Endothelial cell of umbilical vein (primary cell): ENCODE measurements at regions of chrX and their contacts with region 1.

Region 1: GRCh38 chrX:101617211-101618191 is at the start of gene ARMCX6:
- DNase-seq: peak; percentile 71
- H3K4me3 ChIP-seq: peak within 1 kb of the TSS; percentile 80 to 88 (median 87)
- H3K27ac ChIP-seq: peak within 1 kb of the TSS; percentile 60
- H3K4me1 ChIP-seq: peaks cover 9% of the 10 kb centered on the region
- H3K27me3 ChIP-seq: no peaks in the 10 kb centered on the region
- CTCF ChIP-seq: peak; percentile 8 to 57
- POLR2A ChIP-seq: peak; percentile 74
- total RNA-seq, gene ARMCX6: 91.9 and 98.6 TPM in 2 replicates

Region 2: GRCh38 chrX:101191217-101191750 is 426.2 kb before region 1 on chrX:
- CTCF ChIA-PET with region 1: no interaction called
- POLR2A ChIA-PET with region 1: no interaction called
- dilution Hi-C with region 1: no loop called
- intact Hi-C with region 1: no loop called
- DNase-seq: peak; percentile 29
- H3K4me3 ChIP-seq: peak overlapping the region in 1 of 3 experiments; percentile 28
- H3K27ac ChIP-seq: no peak overlapping the region
- H3K4me1 ChIP-seq: peaks cover 4% of the 10 kb centered on the region
- H3K27me3 ChIP-seq: no peaks in the 10 kb centered on the region
- CTCF ChIP-seq: no peak
- POLR2A ChIP-seq: no peak

Region 3: DNA sequence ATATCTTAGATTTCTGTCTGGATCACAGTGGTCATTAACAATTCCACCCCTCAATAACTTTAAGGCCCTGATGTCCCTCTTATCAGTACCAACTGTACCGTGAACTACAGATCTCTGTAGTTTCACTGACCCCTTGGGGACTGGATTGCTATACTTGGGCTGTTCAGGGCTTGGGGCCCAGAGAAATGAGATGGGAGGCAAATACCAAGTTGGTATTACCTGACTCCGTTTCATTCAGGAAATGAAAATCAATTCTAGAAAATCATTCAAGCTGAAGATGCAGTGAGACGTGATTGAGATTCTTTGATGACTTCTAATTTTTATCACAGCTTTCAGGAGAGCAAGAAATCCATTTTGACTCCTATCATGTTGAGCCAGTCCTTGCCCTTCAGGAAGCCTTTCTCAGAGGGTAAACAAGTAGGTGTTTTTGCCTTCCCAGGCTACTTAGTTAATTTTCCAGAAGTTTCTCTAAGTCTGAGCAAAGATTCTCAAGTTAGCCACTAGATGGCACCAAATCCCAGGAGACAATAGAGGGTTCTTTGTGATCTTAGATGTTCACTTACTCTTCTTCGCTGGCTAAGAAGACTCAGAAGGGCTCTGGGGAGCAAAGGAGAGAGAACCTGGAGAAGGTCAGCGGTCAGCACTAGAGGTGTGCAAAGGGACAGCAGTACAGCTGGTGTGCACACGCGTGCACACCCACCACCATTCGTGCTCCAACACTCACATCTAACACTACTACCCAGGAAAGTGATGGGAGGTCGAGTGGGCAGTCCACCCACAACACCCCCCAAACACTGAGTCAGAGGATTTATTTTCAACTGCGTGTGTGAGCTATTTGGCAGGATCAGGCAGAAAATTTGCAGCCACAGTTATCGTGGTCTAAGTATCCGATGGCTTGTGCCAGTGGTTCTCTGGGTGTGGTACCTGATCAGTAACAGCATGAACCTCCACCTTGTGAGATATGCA is 202.0 kb before region 1 on chrX:
- CTCF ChIA-PET with region 1: no interaction called
- POLR2A ChIA-PET with region 1: no interaction called
- dilution Hi-C with region 1: no loop called
- intact Hi-C with region 1: loop called (anchors 5 kb)
- DNase-seq: peak; percentile 78
- H3K4me3 ChIP-seq: no peak overlapping the region
- H3K27ac ChIP-seq: no peak overlapping the region
- H3K4me1 ChIP-seq: peaks cover 15% of the 10 kb centered on the region
- H3K27me3 ChIP-seq: no peaks in the 10 kb centered on the region
- CTCF ChIP-seq: peak; percentile 33 to 45
- POLR2A ChIP-seq: no peak

Region 4: DNA sequence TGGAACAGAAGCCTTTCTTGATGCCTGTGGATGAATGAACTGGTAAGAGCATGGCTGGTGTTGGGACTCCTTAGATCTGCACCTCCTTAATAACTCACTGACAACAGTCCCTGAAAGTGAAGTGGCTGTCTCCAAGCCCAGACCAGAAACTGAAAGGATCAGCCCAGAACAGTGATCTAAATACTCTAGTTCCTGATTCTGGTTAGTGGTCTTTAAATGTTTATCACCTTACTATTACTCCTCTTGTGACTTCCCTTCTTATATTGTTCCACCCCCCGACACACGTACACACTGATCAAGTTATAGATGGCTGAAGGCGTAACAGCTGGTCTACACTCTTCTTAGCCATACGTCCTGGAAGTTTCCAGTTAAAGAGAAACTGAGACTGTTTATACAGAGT is 76.0 kb after region 1 on chrX:
- CTCF ChIA-PET with region 1: no interaction called
- POLR2A ChIA-PET with region 1: no interaction called
- dilution Hi-C with region 1: no loop called
- intact Hi-C with region 1: loop called (anchors 5 kb)
- DNase-seq: no peak
- H3K4me3 ChIP-seq: no peak overlapping the region
- H3K27ac ChIP-seq: no peak overlapping the region
- H3K4me1 ChIP-seq: peaks cover 17% of the 10 kb centered on the region
- H3K27me3 ChIP-seq: no peaks in the 10 kb centered on the region
- CTCF ChIP-seq: no peak
- POLR2A ChIP-seq: no peak

Region 5: DNA sequence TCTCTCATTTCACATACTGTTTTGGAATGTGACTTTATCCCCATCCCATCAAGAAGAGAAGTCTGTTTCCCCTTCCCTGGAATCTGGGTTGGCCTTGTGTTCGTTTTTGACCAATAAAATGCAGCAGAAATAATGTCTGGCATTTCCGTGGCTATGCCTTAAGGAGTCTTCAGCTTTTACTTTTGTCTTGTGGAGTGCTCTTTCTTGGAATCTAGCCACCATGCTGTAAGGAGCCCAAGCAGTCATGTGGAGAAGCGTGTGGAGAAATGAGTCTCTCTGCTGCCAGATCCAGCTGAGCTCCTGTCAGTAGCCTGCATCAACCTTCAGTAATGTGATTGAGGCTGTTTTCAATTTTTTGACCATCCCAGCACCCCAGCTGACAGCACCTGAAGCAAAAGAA is 126.6 kb after region 1 on chrX:
- CTCF ChIA-PET with region 1: no interaction called
- POLR2A ChIA-PET with region 1: no interaction called
- dilution Hi-C with region 1: no loop called
- intact Hi-C with region 1: loop called (anchors 5 kb)
- DNase-seq: no peak
- H3K4me3 ChIP-seq: no peak overlapping the region
- H3K27ac ChIP-seq: no peak overlapping the region
- H3K4me1 ChIP-seq: no peaks in the 10 kb centered on the region
- H3K27me3 ChIP-seq: no peaks in the 10 kb centered on the region
- CTCF ChIP-seq: no peak
- POLR2A ChIP-seq: no peak

Region 6: GRCh38 chrX:101759000-101759399 is 141.5 kb after region 1 on chrX:
- CTCF ChIA-PET with region 1: interaction called, 3 read pairs
- POLR2A ChIA-PET with region 1: no interaction called
- dilution Hi-C with region 1: no loop called
- intact Hi-C with region 1: loop called (anchors 5 kb)
- DNase-seq: peak; percentile 69
- H3K4me3 ChIP-seq: no peak overlapping the region
- H3K27ac ChIP-seq: no peak overlapping the region
- H3K4me1 ChIP-seq: no peaks in the 10 kb centered on the region
- H3K27me3 ChIP-seq: no peaks in the 10 kb centered on the region
- CTCF ChIP-seq: peak; percentile 22 to 30
- POLR2A ChIP-seq: no peak

Region 7: GRCh38 chrX:101918751-101919150 is 301.2 kb after region 1 on chrX:
- CTCF ChIA-PET with region 1: no interaction called
- POLR2A ChIA-PET with region 1: no interaction called
- dilution Hi-C with region 1: no loop called
- intact Hi-C with region 1: no loop called
- DNase-seq: peak; percentile 69
- H3K4me3 ChIP-seq: no peak overlapping the region
- H3K27ac ChIP-seq: peak overlapping the region; percentile 34
- H3K4me1 ChIP-seq: peaks cover 8% of the 10 kb centered on the region
- H3K27me3 ChIP-seq: no peaks in the 10 kb centered on the region
- CTCF ChIP-seq: no peak
- POLR2A ChIP-seq: no peak